Heart left ventricle (tissue), 16 donors: ENCODE measurements at regions of chr7 and their contacts with region 1.

Region 1: DNA sequence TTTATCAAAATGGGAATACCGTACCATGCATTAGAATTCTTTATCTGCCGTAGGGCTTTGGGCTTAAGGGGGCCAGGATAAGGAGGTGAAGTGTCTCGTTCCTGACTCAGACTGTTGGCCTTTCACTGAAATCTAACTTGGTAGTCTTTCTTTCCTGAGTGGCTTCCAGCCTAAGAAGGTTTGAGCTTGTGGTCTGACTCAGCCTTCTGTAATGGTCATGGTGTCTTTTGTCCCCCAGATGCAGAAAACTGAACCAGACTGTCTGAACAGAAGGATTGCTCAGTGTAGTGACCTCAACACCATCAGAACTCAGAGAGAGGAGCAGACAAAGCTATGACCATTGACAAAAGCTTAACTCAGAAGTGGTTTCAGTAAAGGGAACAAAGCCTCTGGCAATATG is 39.5 kb downstream of the WNT2 start:
- DNase-seq: no peak
- ATAC-seq: no peak
- H3K4me3 ChIP-seq: no peak overlapping the region
- H3K27ac ChIP-seq: no peak overlapping the region
- H3K4me1 ChIP-seq: peaks cover 0 to 3% (median 0%) of the 10 kb centered on the region in 12 donors
- H3K27me3 ChIP-seq: no peaks in the 10 kb centered on the region
- CTCF ChIP-seq: no peak
- POLR2A ChIP-seq: no peak

Region 2: GRCh38 chr7:117296066-117296465 is 12.7 kb after region 1 on chr7:
- intact Hi-C with region 1: loop called in 1 of 10 experiments (anchors 1 kb)
- DNase-seq: no peak
- ATAC-seq: no peak
- H3K4me3 ChIP-seq: no peak overlapping the region
- H3K27ac ChIP-seq: no peak overlapping the region
- H3K4me1 ChIP-seq: no peaks in the 10 kb centered on the region
- H3K27me3 ChIP-seq: no peaks in the 10 kb centered on the region
- CTCF ChIP-seq: no peak
- POLR2A ChIP-seq: no peak